Activated naive CD4-positive, alpha-beta T cell treated with anti-CD3 and anti-CD28 coated beads for 36 hours (primary cell): ENCODE measurements at regions of chr22 and their contacts with region 1.

Region 1: GRCh38 chr22:49767355-49768062 is 60.2 kb downstream of the BRD1 start:
- DNase-seq: peak; percentile 61
- H3K4me3 Mint-ChIP-seq: no peak overlapping the region
- H3K27ac Mint-ChIP-seq: no peak overlapping the region
- H3K4me1 Mint-ChIP-seq: peaks cover 6% of the 10 kb centered on the region
- H3K27me3 Mint-ChIP-seq: no peaks in the 10 kb centered on the region

Region 2: GRCh38 chr22:49746065-49746464 is 21.4 kb before region 1 on chr22:
- CTCF ChIA-PET with region 1: no interaction called
- intact Hi-C with region 1: no loop called
- DNase-seq: no peak
- H3K4me3 Mint-ChIP-seq: no peak overlapping the region
- H3K27ac Mint-ChIP-seq: no peak overlapping the region
- H3K4me1 Mint-ChIP-seq: no peaks in the 10 kb centered on the region
- H3K27me3 Mint-ChIP-seq: peaks cover 5% of the 10 kb centered on the region

Region 3: GRCh38 chr22:49925525-49926128 is 158.1 kb after region 1 on chr22:
- CTCF ChIA-PET with region 1: interaction called, 12 read pairs
- intact Hi-C with region 1: loop called (anchors 1 kb)
- DNase-seq: peak; percentile 84
- H3K4me3 Mint-ChIP-seq: peak overlapping the region; percentile 73
- H3K27ac Mint-ChIP-seq: peak overlapping the region; percentile 95
- H3K4me1 Mint-ChIP-seq: peaks cover 27% of the 10 kb centered on the region
- H3K27me3 Mint-ChIP-seq: no peaks in the 10 kb centered on the region

Region 4: GRCh38 chr22:49992921-49993648 is 225.6 kb after region 1 on chr22:
- CTCF ChIA-PET with region 1: no interaction called
- intact Hi-C with region 1: loop called (anchors 1 kb)
- DNase-seq: peak; percentile 85
- H3K4me3 Mint-ChIP-seq: no peak overlapping the region
- H3K27ac Mint-ChIP-seq: peak overlapping the region; percentile 19
- H3K4me1 Mint-ChIP-seq: peaks cover 4% of the 10 kb centered on the region
- H3K27me3 Mint-ChIP-seq: no peaks in the 10 kb centered on the region

Region 5: DNA sequence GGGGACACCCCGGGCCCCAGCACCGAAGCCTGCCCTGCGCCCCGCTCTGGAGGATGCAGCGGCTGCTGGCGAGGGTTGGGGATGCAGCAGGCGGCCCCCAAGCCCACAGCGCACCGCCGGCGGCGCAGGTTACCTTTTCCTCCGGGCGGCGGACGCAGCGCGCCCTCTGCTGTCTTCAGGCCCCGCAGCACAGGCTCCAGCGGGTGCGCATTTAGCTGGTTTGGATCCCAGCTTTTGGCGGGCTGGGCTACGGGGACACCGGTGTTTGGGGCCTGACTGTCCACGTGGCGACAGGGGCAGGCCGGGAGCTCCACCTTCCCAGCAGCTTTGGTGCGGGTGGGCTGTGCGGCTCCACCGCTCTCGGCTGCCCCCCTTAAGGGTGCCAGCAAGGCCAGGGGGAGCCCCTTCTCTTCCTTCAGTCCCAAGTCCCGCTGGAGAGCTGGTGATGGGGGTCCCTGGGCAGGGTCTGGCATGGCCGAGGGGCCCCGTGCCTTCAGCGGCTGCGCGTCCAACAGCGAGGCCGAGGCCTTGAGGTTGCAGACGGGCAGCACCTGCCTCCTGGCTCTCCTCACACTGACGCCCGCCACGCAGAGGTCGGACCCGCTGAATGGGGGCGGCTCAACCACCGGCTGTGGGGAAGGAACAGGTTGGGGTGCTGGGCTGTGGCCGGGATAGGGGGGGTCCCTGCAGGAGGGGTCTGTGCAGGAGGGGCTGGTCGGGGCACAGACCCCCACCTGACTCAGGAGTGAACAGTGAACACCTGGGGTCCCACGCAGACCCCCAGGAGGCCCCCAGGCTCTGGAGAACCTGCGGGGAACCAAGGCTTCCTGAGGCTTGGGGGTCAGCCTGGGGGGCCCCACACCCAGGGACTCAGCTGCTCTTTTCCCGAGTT is 263.0 kb after region 1 on chr22:
- CTCF ChIA-PET with region 1: interaction called, 9 read pairs
- intact Hi-C with region 1: loop called (anchors 1 kb)
- DNase-seq: peak; percentile 93
- H3K4me3 Mint-ChIP-seq: no peak overlapping the region
- H3K27ac Mint-ChIP-seq: no peak overlapping the region
- H3K4me1 Mint-ChIP-seq: peaks cover 13% of the 10 kb centered on the region
- H3K27me3 Mint-ChIP-seq: peaks cover 21% of the 10 kb centered on the region

Region 6: DNA sequence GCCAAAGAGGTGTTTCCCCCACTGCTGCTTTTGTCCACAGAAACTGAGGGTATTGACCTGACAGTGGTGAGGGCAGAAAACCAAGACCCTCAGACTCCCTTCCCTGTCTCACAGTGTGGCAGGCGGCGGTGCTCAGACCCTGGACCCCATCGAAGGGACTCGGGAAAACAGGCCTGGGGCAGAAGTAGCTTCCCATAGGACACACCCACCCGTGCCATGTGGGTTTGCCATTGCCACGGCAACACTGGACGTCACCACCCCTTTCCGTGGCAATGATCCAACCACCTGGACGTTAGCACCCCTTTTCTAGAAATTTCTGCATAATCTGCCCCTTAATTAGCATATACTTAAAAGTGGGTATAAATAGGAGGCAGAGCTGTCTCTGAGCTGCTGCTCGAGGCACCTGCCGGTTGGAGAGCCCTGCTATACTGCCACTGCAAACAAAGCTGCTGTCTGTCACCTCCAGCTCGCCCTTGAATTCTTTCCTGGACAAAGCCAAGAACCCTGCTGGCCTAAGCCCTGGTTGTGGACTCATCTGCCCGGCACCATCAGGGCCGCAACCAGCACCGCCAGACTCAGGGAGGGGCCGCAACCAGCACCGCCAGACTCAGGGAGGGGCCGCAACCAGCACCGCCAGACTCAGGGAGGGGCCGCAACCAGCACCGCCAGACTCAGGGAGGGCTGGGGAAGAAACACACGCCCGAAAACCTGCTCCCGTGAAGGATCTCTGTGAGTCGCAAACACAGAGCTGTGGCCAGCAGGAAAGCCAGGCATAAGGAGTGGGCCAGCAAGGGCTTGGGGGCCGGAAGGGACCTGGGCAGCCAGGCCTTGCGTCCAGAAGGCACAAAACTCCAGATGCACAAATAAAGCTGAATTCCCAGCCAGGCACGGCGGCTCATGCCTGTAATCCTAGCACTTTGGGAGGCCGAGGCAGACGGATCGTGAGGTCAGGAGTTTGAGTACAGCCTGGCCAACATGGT is 307.3 kb after region 1 on chr22:
- CTCF ChIA-PET with region 1: no interaction called
- intact Hi-C with region 1: no loop called
- DNase-seq: no peak
- H3K4me3 Mint-ChIP-seq: no peak overlapping the region
- H3K27ac Mint-ChIP-seq: no peak overlapping the region
- H3K4me1 Mint-ChIP-seq: no peaks in the 10 kb centered on the region
- H3K27me3 Mint-ChIP-seq: no peaks in the 10 kb centered on the region

Region 7: DNA sequence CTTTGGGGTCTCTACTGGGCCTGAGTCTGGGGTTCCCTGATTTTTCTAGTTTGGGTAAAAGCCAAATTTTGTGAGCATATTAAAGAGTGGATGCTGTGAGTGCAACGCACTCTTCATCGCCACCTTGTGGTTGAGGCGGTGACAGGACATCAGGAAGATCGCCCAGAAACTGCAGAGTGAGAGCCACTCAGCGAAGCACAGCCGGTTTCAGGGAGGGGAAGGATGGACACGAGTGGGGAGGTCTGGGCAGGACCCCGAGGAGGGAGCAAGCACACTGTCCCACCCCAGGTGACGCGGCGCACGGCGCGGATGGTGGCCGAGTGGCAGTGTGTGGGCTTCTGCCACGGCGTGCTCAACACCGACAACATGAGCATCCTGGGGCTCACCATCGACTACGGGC is 442.4 kb after region 1 on chr22:
- CTCF ChIA-PET with region 1: no interaction called
- intact Hi-C with region 1: loop called (anchors 5 kb)
- DNase-seq: peak; percentile 83
- H3K4me3 Mint-ChIP-seq: no peak overlapping the region
- H3K27ac Mint-ChIP-seq: peak overlapping the region; percentile 78
- H3K4me1 Mint-ChIP-seq: peaks cover 13% of the 10 kb centered on the region
- H3K27me3 Mint-ChIP-seq: no peaks in the 10 kb centered on the region